Gastrocnemius medialis (tissue), 4 donors: ENCODE measurements at regions of chr11 and their contacts with region 1.

Region 1: DNA sequence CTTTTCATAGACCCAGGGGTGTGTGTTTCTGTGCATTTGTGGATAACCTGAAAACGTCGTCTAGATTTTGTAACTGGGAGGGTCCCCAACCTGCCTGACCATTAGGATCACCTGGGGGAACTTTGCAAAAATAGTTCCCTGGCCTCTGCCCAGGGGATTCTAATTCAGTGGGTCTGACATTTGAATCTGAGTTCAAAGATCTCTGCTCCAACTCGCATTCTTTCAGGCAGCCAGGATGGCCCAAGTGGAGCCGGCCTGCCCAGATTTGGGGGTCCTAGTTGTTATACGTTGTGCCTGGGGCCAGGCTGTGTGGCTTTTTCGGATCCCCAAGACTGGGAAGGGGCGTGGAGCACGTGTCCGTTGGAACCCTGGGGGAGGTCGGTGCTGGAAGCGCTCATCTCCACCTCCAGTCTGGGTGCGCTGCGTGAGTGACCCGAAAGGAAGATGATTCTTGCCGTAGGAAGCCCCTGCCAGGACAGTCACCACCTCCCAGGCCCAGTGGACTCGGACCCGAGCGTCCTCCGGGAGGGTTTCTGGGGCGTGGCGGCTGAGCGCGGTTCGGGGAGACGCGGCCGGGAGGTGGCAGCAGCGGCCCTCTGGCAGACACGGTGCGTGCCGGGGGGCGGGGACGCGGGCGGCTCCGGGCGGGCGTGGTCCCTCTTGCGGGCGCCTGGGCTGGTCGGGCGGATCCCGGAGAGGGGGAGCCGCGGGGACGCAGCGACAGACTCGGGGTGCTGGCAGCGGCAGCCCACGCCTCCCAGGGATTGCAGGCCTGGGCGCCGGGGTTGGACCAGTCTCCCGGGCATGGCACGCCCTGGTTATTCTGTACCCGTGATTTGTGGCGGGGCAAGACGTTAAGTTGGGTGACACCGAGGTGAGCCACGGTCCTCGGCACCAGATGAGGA is 29.2 kb upstream of the PLET1 start:
- DNase-seq: peak; percentile 63 to 67
- ATAC-seq: peak; percentile 63 to 70
- H3K4me3 ChIP-seq: peak overlapping the region; percentile 61 to 77 (median 68)
- H3K27ac ChIP-seq: peak overlapping the region; percentile 71 to 85 (median 82)
- H3K4me1 ChIP-seq: peaks cover 42 to 44% of the 10 kb centered on the region in 2 donors
- H3K27me3 ChIP-seq: no peaks in the 10 kb centered on the region
- CTCF ChIP-seq: peak; percentile 79 to 96 (median 84)
- POLR2A ChIP-seq: peak; percentile 23 to 40

Region 2: DNA sequence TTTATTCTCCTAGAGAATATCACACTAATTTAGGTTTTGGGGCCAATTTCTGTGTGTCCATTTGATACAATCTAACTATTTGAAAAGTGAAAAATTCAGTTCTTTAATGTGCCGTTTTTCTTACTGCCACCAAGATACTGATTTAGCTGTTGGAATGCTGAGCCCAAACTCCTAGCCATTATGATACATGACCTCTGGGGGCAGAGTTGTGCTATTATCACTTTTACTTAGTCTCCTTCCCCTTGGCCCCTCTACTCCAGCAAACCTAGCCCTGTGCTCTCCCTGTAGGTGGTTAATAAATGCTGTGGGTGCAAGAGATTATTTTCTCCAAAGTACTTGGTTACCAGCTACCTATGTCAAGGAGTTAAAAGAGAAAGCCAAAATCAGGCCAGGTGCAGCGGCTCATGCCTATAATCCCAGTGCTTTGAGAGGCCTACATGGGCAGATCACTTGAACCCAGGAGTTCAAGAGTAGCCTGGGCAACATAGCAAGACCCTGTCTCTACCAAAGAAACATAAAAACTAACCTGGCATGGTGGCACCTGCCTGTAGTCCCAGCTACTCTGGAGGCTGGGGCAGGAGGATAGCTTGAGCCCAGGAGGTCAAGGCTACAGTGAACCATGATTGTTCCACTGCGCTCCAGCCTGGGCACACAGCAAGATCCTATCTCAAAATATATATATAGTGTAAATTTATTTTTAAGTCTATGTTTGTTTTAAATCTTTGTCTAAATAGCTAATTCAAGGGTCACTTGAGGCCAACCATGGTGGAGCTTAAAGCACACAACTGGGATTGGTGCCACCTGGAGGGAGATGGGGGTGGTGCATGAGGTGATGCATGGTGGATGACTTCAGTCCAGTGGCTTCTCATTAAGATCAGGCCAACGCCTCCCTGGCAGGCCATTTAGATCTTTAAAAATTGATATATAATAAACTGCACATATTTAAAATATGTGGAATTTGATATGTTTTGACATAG is 164.0 kb after region 1 on chr11:
- in situ Hi-C with region 1: no loop called
- intact Hi-C with region 1: loop called (anchors 1 kb)
- DNase-seq: peak in 1 of 2 donors; percentile 17
- ATAC-seq: no peak
- H3K4me3 ChIP-seq: no peak overlapping the region
- H3K27ac ChIP-seq: no peak overlapping the region
- H3K4me1 ChIP-seq: no peaks in the 10 kb centered on the region
- H3K27me3 ChIP-seq: no peaks in the 10 kb centered on the region
- CTCF ChIP-seq: peak in 3 of 5 experiments; percentile 19 to 38 (median 28)
- POLR2A ChIP-seq: no peak

Region 3: DNA sequence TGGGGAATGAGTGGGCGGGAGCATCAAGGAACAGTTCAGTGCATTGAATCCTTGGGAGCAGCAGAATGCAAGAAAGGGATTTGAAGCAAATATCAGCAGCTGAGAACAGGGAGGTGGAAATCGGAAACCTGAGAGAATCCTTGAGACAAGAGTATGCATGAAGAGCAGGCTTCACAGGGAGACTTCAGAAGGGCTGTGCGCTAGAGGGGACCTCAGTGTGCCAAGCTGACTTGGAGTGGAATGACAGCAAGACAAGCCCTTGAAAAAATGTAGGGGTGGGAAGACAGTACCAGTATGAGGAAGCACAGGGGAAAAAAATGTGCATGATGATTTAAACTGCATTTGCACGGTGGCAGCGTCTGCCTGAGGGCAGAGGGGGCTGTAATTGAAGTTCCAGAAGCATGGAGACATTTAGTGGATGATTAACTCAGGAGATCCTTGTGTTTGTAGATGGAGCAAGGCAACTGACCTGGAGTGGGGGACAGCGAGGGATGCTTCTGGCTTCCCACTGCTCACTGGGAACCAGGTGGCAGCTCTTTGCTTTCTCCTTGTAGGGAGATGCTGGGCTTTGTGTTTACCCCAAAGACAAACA is 175.7 kb after region 1 on chr11:
- in situ Hi-C with region 1: no loop called
- intact Hi-C with region 1: loop called (anchors 5 kb)
- DNase-seq: no peak
- ATAC-seq: no peak
- H3K4me3 ChIP-seq: no peak overlapping the region
- H3K27ac ChIP-seq: no peak overlapping the region
- H3K4me1 ChIP-seq: peaks cover 8 to 11% of the 10 kb centered on the region in 2 donors
- H3K27me3 ChIP-seq: no peaks in the 10 kb centered on the region
- CTCF ChIP-seq: no peak
- POLR2A ChIP-seq: no peak